ENCODE measurements at regions of chr4 and their contacts with region 1.

Region 1: GRCh38 chr4:38675146-38676121 is 11.4 kb downstream of the KLF3 start:
- DNase-seq: peak; percentile 90 to 95
- H3K4me3 ChIP-seq: no peak overlapping the region
- CTCF ChIP-seq: peak in 1 of 3 donors; percentile 89
- POLR2A ChIP-seq: no peak

Region 2: GRCh38 chr4:38069271-38069760 is 606.1 kb before region 1 on chr4:
- intact Hi-C with region 1: loop called (anchors 5 kb)
- DNase-seq: peak in 1 of 2 donors; percentile 81
- H3K4me3 ChIP-seq: no peak overlapping the region
- CTCF ChIP-seq: no peak
- POLR2A ChIP-seq: no peak

Region 3: GRCh38 chr4:38179690-38180377 is 495.6 kb before region 1 on chr4:
- intact Hi-C with region 1: loop called (anchors 5 kb)
- DNase-seq: peak; percentile 80 to 93
- H3K4me3 ChIP-seq: no peak overlapping the region
- CTCF ChIP-seq: peak in 1 of 3 donors; percentile 43
- POLR2A ChIP-seq: no peak

Region 4: GRCh38 chr4:38319456-38320342 is 355.7 kb before region 1 on chr4:
- intact Hi-C with region 1: loop called (anchors 5 kb)
- DNase-seq: peak; percentile 95 to 99
- H3K4me3 ChIP-seq: no peak overlapping the region
- CTCF ChIP-seq: peak in 1 of 3 donors; percentile 87
- POLR2A ChIP-seq: no peak

Region 5: GRCh38 chr4:38634047-38634759 is 41.2 kb before region 1 on chr4:
- intact Hi-C with region 1: no loop called
- DNase-seq: no peak
- H3K4me3 ChIP-seq: no peak overlapping the region
- CTCF ChIP-seq: no peak
- POLR2A ChIP-seq: no peak